MCF 10A (cell line): ENCODE measurements at regions of chr3 and their contacts with region 1.

Region 1: GRCh38 chr3:24640330-24640877 is 145.8 kb upstream of the THRB start:
- DNase-seq: peak; percentile 60
- H3K4me3 Mint-ChIP-seq: no peak overlapping the region
- H3K27ac Mint-ChIP-seq: peak overlapping the region; percentile 20
- H3K4me1 Mint-ChIP-seq: peaks cover 7% of the 10 kb centered on the region
- H3K27me3 Mint-ChIP-seq: no peaks in the 10 kb centered on the region
- CTCF ChIP-seq: peak; percentile 71

Region 2: GRCh38 chr3:23999012-23999641 is 641.3 kb before region 1 on chr3:
- CTCF ChIA-PET with region 1: interaction called, 4 read pairs
- POLR2A ChIA-PET with region 1: no interaction called
- intact Hi-C with region 1: loop called (anchors 1 kb)
- DNase-seq: peak; percentile 73
- H3K4me3 Mint-ChIP-seq: no peak overlapping the region
- H3K27ac Mint-ChIP-seq: no peak overlapping the region
- H3K4me1 Mint-ChIP-seq: peaks cover 5% of the 10 kb centered on the region
- H3K27me3 Mint-ChIP-seq: no peaks in the 10 kb centered on the region
- CTCF ChIP-seq: peak; percentile 95

Region 3: GRCh38 chr3:24264748-24265158 is 375.7 kb before region 1 on chr3:
- CTCF ChIA-PET with region 1: interaction called, 30 read pairs
- POLR2A ChIA-PET with region 1: no interaction called
- intact Hi-C with region 1: loop called (anchors 1 kb)
- DNase-seq: peak; percentile 53
- H3K4me3 Mint-ChIP-seq: no peak overlapping the region
- H3K27ac Mint-ChIP-seq: no peak overlapping the region
- H3K4me1 Mint-ChIP-seq: peaks cover 5% of the 10 kb centered on the region
- H3K27me3 Mint-ChIP-seq: no peaks in the 10 kb centered on the region
- CTCF ChIP-seq: peak; percentile 71

Region 4: GRCh38 chr3:24494618-24495325 is 145.6 kb before region 1 on chr3 and contains the start of gene THRB:
- CTCF ChIA-PET with region 1: interaction called, 3 read pairs
- POLR2A ChIA-PET with region 1: interaction called, 3 read pairs
- intact Hi-C with region 1: loop called (anchors 2 kb)
- DNase-seq: peak; percentile 60
- H3K4me3 Mint-ChIP-seq: peak within 1 kb of the TSS; percentile 94
- H3K27ac Mint-ChIP-seq: peak within 1 kb of the TSS; percentile 87
- H3K4me1 Mint-ChIP-seq: peaks cover 16% of the 10 kb centered on the region
- H3K27me3 Mint-ChIP-seq: no peaks in the 10 kb centered on the region
- CTCF ChIP-seq: no peak
- total RNA-seq, gene THRB: 3.8 and 4.2 TPM in 2 replicates

Region 5: GRCh38 chr3:24591661-24592522 is 48.5 kb before region 1 on chr3:
- CTCF ChIA-PET with region 1: interaction called, 5 read pairs
- POLR2A ChIA-PET with region 1: no interaction called
- intact Hi-C with region 1: loop called (anchors 5 kb)
- DNase-seq: peak; percentile 93
- H3K4me3 Mint-ChIP-seq: no peak overlapping the region
- H3K27ac Mint-ChIP-seq: peak overlapping the region; percentile 88
- H3K4me1 Mint-ChIP-seq: peaks cover 30% of the 10 kb centered on the region
- H3K27me3 Mint-ChIP-seq: no peaks in the 10 kb centered on the region
- CTCF ChIP-seq: no peak

Region 6: GRCh38 chr3:24704496-24704895 is 64.1 kb after region 1 on chr3:
- CTCF ChIA-PET with region 1: no interaction called
- POLR2A ChIA-PET with region 1: no interaction called
- intact Hi-C with region 1: no loop called
- DNase-seq: peak; percentile 96
- H3K4me3 Mint-ChIP-seq: no peak overlapping the region
- H3K27ac Mint-ChIP-seq: no peak overlapping the region
- H3K4me1 Mint-ChIP-seq: peaks cover 15% of the 10 kb centered on the region
- H3K27me3 Mint-ChIP-seq: no peaks in the 10 kb centered on the region
- CTCF ChIP-seq: no peak

Region 7: DNA sequence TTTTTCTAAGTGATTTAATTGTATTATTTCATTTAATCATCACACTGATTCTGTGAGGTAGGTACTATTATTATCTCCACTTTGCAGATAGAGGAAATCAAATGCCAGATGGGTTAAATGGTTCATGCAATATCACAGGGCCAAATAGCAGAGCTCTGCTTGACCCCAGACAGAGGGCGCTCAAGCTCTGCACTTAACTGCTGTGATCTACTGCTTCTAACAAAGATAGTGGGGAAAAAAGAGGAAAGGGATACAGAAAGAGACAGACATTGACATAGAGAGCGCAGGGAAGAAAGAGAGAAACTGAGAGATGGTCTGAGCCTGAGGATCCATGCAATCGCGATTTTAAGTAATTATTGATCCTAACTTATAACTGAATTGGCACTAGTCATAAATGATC is 133.4 kb after region 1 on chr3:
- CTCF ChIA-PET with region 1: no interaction called
- POLR2A ChIA-PET with region 1: no interaction called
- intact Hi-C with region 1: no loop called
- DNase-seq: peak; percentile 72
- H3K4me3 Mint-ChIP-seq: no peak overlapping the region
- H3K27ac Mint-ChIP-seq: no peak overlapping the region
- H3K4me1 Mint-ChIP-seq: peaks cover 6% of the 10 kb centered on the region
- H3K27me3 Mint-ChIP-seq: peaks cover 17% of the 10 kb centered on the region
- CTCF ChIP-seq: peak; percentile 77